Sigmoid colon (tissue), 7 donors: ENCODE measurements at regions of chr3 and their contacts with region 1.

Region 1: GRCh38 chr3:66693461-66694031 is 192.7 kb upstream of the LRIG1 start:
- DNase-seq: peak; percentile 74
- H3K4me3 ChIP-seq: no peak overlapping the region
- H3K27ac ChIP-seq: peak overlapping the region; percentile 56 to 83 (median 78)
- H3K4me1 ChIP-seq: peaks cover 0 to 48% (median 40%) of the 10 kb centered on the region in 4 donors
- H3K27me3 ChIP-seq: no peaks in the 10 kb centered on the region
- CTCF ChIP-seq: no peak
- EP300 ChIP-seq: no peak
- POLR2A ChIP-seq: no peak

Region 2: GRCh38 chr3:66472313-66473134 is 221.0 kb before region 1 on chr3:
- intact Hi-C with region 1: no loop called
- DNase-seq: no peak
- H3K4me3 ChIP-seq: peak overlapping the region in 1 of 4 donors; percentile 16
- H3K27ac ChIP-seq: peak overlapping the region; percentile 41 to 95 (median 91)
- H3K4me1 ChIP-seq: peaks cover 0 to 98% (median 90%) of the 10 kb centered on the region in 4 donors
- H3K27me3 ChIP-seq: no peaks in the 10 kb centered on the region
- CTCF ChIP-seq: no peak
- EP300 ChIP-seq: no peak
- POLR2A ChIP-seq: no peak

Region 3: GRCh38 chr3:66615643-66616301 is 77.8 kb before region 1 on chr3:
- intact Hi-C with region 1: loop called (anchors 5 kb)
- DNase-seq: no peak
- H3K4me3 ChIP-seq: no peak overlapping the region
- H3K27ac ChIP-seq: peak overlapping the region in 3 of 4 donors; percentile 53 to 74 (median 72)
- H3K4me1 ChIP-seq: peaks cover 0 to 36% (median 30%) of the 10 kb centered on the region in 4 donors
- H3K27me3 ChIP-seq: no peaks in the 10 kb centered on the region
- CTCF ChIP-seq: no peak
- EP300 ChIP-seq: no peak
- POLR2A ChIP-seq: no peak

Region 4: DNA sequence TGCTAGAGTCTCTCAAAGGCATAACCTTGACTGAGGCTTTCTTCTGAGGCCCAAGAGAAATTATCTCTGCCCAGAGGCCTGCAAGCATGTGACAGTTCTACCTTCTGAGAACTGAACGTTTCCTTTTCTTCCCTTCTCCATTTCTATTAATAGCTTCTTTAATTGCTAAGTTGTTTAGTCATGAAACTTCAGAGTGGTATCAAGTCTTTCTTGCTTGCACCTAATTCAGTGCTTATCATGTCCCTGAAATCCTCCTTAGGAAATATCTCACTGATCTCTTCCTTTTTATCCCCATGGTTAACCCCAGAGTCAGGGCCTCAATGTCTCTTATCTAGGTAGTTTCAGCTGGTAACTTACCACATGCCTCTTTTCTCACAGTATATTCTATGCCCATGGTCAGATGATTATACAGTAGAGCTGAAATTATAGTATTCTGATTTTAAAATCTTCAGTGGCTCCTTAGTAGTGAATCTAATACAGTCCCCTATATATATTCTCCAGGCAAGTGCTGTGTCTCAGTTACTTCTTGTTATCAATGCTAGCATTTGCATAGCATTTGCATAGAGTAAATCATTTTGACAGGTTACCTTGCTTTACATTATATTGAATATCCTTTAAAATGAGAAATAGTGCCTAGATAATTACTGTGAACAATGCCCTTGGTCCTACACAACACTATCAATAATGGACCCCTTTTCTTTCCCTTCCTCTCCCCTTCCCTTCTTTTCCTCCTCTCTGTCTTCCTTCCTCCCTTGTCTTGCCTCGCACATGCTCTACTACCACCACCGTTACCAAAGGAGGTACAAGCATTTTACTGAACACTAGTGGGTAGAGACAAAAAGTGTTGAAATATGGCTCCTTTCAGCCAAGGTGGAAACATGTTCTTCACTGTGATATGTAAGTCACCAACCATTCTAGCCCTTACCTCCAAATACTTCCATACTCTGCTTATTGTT is 337.5 kb after region 1 on chr3:
- intact Hi-C with region 1: no loop called
- DNase-seq: no peak
- H3K4me3 ChIP-seq: no peak overlapping the region
- H3K27ac ChIP-seq: no peak overlapping the region
- H3K4me1 ChIP-seq: no peaks in the 10 kb centered on the region
- H3K27me3 ChIP-seq: no peaks in the 10 kb centered on the region
- CTCF ChIP-seq: no peak
- EP300 ChIP-seq: no peak
- POLR2A ChIP-seq: no peak